Posterior cingulate gyrus (tissue), 11 donors: ENCODE measurements at regions of chr1 and their contacts with region 1.

Region 1: DNA sequence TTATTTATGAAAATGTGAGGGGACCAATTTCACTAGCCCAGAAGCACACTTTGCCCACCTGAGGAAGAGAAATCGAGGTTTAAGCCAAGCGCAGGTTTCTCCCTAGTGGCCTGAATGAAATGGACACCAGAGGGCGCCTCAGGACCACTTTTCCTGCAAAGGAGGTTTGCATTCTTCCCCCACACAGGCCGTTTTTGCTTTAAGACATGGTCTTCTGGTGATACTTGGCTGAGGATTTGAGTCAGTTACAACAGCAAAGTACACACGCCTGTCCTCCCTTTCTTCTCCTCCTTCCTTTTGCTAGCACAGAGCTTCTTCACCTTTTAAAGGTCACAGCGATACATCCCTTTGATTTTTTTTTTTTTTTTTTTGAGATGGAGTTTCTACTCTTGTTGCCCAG is 5.4 kb downstream of the PLA2G2E start:
- DNase-seq: peak; percentile 53 to 96 (median 86)

Region 2: DNA sequence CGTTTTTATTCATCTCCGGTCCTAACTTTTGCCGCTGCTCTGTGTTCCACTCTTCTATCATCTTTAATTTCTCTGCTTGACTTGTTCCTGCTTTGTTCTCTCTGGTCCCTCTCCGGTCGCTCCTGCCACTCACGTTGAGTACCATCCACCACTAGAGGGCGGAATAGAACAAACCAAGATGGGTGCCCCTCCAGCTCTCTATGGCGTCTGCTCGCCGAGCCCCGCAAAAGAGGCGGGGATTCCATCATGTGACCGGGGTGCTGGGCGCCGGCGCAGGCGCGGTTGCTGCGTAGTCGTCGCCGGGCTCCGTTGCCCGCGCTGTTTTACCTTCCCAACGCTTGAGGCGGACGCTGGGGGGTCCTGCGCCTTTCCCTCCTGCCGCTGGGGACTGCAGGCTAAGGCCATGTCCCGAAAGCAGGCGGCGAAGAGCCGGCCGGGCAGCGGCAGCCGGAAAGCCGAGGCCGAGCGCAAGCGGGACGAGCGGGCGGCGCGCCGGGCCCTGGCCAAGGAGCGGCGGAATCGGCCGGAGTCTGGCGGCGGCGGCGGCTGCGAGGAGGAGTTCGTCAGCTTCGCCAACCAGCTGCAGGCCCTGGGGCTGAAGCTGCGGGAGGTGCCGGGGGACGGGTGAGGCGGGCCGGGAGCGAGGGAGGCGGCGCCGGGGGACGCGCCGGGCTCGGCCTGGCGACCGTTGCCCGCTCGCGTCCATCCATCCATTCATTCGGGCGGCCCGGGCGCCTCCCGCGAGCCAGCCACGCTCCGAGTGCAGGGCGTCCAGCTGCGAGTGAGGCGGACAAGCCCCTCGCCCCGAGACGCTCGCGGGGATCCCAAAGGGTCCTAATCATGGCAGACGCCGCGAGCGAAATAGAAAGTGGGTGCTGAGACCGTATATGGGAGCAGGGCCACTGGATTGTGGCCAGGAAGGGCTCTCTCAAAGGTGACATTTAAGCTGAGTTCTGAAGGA is 35.7 kb before region 1 on chr1 and contains the start of gene OTUD3:
- intact Hi-C with region 1: loop called (anchors 2 kb)
- DNase-seq: peak; percentile 90 to 99 (median 94)

Region 3: DNA sequence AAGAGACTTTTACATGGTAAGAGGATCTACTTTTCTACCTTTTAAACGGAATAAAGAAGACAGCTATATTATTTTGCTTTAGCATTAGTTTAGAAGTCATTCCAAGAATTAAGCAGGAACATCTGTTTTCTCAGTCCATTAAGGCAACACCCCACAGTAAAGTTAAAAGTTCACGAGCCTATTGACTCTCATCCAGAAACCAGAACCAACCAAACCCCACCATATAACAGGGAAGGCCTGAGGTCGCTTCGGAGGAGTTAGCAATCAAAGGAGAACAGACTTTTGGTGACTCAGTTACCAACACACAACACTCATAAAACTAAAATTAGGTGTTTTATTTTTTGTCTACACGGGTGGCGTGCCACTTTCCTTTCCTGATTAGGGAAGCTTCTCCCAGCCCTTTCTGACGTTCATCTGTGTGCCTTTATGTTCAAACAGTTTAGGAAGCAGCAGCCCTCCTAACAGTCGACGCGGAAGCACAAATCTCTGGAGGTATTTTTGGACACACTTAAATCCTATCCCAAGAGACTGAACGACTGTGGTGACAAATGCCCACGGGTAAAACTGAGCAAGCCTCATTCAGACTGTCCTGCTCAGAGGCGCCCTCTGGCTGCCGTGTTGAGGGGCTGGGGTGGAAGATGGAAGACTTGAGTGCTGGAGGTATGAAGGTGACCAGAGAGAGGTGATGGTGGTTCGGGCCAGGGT is 276.9 kb after region 1 on chr1:
- intact Hi-C with region 1: loop called (anchors 2 kb)
- DNase-seq: peak in 8 of 10 donors; percentile 55 to 94 (median 66)